Activated B cell treated with CpG ODN at 0.5 μM for 24 hours (primary cell): ENCODE measurements at regions of chr16 and their contacts with region 1.

Region 1: GRCh38 chr16:81481207-81481821 is 36.7 kb downstream of the CMIP start:
- DNase-seq: peak; percentile 58
- ATAC-seq: peak; percentile 84
- H3K4me3 Mint-ChIP-seq: peak overlapping the region; percentile 79
- H3K27ac Mint-ChIP-seq: peak overlapping the region; percentile 93
- H3K4me1 Mint-ChIP-seq: peaks cover 90% of the 10 kb centered on the region
- H3K27me3 Mint-ChIP-seq: no peaks in the 10 kb centered on the region
- CTCF ChIP-seq: no peak

Region 2: DNA sequence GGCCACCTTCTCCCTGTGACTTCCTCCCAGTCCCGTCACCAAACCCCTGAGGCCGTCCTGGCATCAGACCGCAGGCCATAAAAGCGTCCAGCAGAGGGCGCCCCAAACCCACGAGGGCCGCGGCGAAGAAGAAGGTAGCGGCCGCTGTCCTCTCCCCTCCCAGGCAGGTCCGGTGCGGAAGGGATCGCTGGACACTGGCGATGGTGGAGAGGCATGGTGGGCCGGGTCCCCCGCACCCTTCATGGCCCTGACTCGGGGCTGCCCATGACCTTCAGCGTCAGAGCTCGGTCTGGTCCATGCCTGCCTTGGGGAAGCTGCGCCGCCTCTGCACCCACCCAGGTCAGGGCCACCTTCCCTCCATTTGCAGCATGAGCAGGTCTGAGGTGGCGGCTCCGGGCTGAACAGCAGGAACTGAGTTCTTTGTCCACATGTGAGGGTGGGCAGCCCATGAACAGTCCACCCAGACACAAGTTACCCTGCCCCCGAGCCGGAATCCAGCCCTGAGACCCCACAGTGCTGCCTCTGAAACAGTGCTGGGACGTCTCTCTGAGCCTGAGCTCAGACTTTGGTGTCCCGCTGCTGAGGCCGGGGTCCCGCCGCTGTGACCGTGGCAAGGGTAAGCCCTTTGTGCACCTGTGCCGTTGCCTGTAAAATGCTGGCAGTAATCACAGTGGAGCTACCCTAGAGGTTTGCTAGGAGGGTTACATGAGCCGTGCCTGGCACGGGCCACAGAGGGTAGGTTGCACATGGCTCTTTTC is 77.5 kb before region 1 on chr16:
- CTCF ChIA-PET with region 1: interaction called, 3 read pairs
- POLR2A ChIA-PET with region 1: interaction called, 7 read pairs
- intact Hi-C with region 1: loop called (anchors 2 kb)
- DNase-seq: peak; percentile 81
- ATAC-seq: peak; percentile 91
- H3K4me3 Mint-ChIP-seq: peak overlapping the region; percentile 19
- H3K27ac Mint-ChIP-seq: no peak overlapping the region
- H3K4me1 Mint-ChIP-seq: peaks cover 3% of the 10 kb centered on the region
- H3K27me3 Mint-ChIP-seq: peaks cover 7% of the 10 kb centered on the region
- CTCF ChIP-seq: peak; percentile 86

Region 3: DNA sequence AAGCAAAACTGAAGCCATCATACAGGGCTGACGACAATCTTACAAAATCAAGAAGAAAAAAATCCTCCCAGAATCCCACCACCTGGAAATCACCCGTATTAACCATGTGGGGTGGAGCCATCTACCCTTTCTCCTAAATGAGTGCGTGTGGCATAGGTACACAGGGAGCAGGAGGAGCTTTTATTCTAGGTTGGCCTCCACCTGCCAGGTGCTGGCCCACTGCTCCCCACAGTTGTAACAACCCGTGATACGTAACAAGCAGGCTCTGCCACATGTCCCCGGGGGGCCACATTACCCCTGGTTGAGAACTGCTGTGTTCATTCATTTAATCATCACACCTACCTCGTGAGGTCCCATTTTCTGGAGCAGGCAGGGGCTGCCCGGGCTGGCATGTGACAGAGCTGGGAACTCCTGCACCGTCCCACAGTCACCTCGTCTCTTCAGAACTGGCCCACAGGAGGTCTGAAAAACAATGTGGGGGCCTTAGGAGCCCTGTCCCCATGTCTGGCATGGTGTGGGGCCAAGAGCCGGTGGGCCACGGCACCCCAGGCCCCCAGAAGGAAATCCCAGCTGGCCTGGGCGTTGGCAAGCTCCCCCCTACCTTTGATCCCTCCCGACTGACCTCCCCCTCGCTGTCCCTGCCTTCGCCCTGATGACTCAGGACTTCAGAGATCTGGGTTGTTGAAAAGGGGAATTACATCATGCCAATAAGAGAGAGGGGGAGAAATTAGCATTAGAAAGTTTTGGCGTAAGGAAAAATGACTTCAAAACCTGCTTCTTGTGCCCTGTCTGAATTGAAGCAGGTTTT is 23.8 kb before region 1 on chr16:
- CTCF ChIA-PET with region 1: interaction called, 4 read pairs
- POLR2A ChIA-PET with region 1: interaction called, 134 read pairs
- intact Hi-C with region 1: loop called (anchors 2 kb)
- DNase-seq: no peak
- ATAC-seq: peak; percentile 73
- H3K4me3 Mint-ChIP-seq: peak overlapping the region; percentile 11
- H3K27ac Mint-ChIP-seq: peak overlapping the region; percentile 66
- H3K4me1 Mint-ChIP-seq: peaks cover 73% of the 10 kb centered on the region
- H3K27me3 Mint-ChIP-seq: no peaks in the 10 kb centered on the region
- CTCF ChIP-seq: no peak

Region 4: DNA sequence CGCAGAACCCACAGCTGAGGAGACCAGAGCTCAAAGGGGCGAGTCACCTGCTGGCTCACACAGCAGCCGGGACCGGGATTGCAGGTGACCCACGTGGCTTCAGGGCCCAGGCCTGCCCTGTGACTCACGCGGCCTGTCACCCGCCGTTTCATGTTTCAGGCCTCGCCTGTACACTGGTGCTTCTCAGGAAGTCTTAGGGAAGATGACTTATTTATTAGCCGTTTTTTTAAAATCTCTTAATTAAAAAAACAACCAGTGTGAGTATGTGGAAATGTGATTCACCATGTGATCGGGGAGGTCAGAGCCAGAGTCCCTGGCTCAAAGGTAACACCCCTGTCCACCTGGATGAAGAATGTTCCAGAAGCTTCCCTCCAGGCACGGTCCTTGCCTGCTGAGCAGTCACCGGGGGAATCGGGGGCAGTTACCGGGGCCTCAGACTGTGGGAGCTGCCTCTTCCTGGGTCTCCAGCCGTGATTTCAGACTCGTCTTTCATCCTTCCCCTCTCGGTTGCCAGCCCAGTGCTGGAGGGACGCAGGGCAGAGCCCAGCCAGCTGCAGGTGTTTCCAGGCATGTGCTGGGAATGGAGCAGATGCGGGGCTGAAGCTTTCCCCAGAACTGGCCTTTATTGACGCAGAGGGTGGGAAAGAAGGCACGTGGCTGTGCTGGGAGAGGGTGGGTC is 12.6 kb after region 1 on chr16:
- CTCF ChIA-PET with region 1: interaction called, 5 read pairs
- POLR2A ChIA-PET with region 1: interaction called, 307 read pairs
- intact Hi-C with region 1: loop called (anchors 1 kb)
- DNase-seq: no peak
- ATAC-seq: no peak
- H3K4me3 Mint-ChIP-seq: no peak overlapping the region
- H3K27ac Mint-ChIP-seq: no peak overlapping the region
- H3K4me1 Mint-ChIP-seq: peaks cover 80% of the 10 kb centered on the region
- H3K27me3 Mint-ChIP-seq: no peaks in the 10 kb centered on the region
- CTCF ChIP-seq: no peak

Region 5: GRCh38 chr16:81831722-81832126 is 350.4 kb after region 1 on chr16:
- CTCF ChIA-PET with region 1: no interaction called
- POLR2A ChIA-PET with region 1: no interaction called
- intact Hi-C with region 1: loop called (anchors 5 kb)
- DNase-seq: peak; percentile 69
- ATAC-seq: peak; percentile 69
- H3K4me3 Mint-ChIP-seq: peak overlapping the region; percentile 77
- H3K27ac Mint-ChIP-seq: peak overlapping the region; percentile 97
- H3K4me1 Mint-ChIP-seq: peaks cover 96% of the 10 kb centered on the region
- H3K27me3 Mint-ChIP-seq: no peaks in the 10 kb centered on the region
- CTCF ChIP-seq: no peak